ENCODE measurements at regions of chr22 and their contacts with region 1.

Region 1: DNA sequence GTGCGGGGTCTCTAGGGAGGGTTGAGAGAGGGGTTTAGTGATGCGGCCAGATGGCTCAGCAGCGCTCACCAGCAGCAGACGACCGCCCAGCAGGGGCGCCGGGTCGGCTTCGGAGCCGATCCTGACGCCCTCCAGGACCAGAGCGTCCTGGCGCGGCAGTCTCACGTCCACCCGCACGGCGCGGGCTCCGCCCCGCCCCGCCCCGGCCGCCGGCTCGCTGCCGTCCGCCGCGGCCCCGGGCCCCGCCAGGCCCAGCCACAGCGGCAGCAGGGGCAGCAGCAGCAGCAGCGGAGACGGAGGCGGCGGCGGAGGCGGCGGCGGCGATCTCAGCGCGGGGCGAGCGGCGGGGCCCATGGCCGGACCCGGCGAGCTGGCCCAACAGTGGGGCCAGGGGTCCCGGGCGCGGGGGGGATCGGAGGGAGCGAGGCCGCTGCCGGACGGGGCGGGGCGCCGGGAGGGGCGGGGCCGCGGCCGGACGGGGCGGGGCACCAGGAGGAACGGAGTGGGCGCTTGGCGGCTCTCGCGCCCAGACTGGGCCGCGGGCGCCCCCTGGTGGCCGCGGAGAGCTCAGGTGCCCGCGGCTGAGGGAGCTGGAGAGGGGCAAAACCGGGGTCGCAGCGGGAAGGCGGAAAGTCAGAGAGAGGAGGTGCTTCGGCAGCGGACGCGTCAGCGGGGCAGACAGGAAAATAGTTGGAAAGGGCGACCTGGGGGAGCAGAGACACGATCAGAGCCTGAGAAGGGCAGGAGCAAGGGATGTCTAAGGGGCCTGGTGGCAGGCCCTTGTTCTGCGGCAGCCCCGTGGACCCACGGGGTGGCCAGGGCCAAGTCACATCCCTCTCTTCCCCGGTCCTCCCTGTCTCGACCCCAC is at the start of gene RNF215:
- DNase-seq: peak; percentile 74 to 82 (median 79)
- H3K4me3 ChIP-seq: peak within 1 kb of the TSS; percentile 22
- H3K4me3 Mint-ChIP-seq: peak within 1 kb of the TSS; percentile 64 to 93 (median 78)
- H3K27ac ChIP-seq: no peak within 1 kb of the TSS
- H3K27ac Mint-ChIP-seq: peak within 1 kb of the TSS; percentile 13 to 96 (median 71)
- H3K4me1 ChIP-seq: peaks cover 4% of the 10 kb centered on the region
- H3K4me1 Mint-ChIP-seq: peaks cover 10 to 20% (median 12%) of the 10 kb centered on the region in 3 donors
- H3K27me3 ChIP-seq: no peaks in the 10 kb centered on the region
- H3K27me3 Mint-ChIP-seq: peaks cover 4 to 14% of the 10 kb centered on the region in 2 donors
- total RNA-seq, gene RNF215: 6.3 to 7.9 TPM

Region 2: GRCh38 chr22:29883045-29883774 is 504.0 kb before region 1 on chr22 and contains the start of gene MTMR3:
- CTCF ChIA-PET with region 1: no interaction called
- POLR2A ChIA-PET with region 1: no interaction called
- DNase-seq: peak; percentile 83 to 90 (median 88)
- H3K4me3 ChIP-seq: peak within 1 kb of the TSS; percentile 77
- H3K4me3 Mint-ChIP-seq: peak within 1 kb of the TSS in 6 of 7 donors; percentile 41 to 94 (median 92)
- H3K27ac ChIP-seq: peak within 1 kb of the TSS; percentile 74
- H3K27ac Mint-ChIP-seq: peak within 1 kb of the TSS; percentile 65 to 96 (median 89)
- H3K4me1 ChIP-seq: peaks cover 34% of the 10 kb centered on the region
- H3K4me1 Mint-ChIP-seq: peaks cover under 1 to 11% (median 2%) of the 10 kb centered on the region in 3 donors
- H3K27me3 ChIP-seq: no peaks in the 10 kb centered on the region
- H3K27me3 Mint-ChIP-seq: peaks cover 2 to 4% of the 10 kb centered on the region in 2 donors
- total RNA-seq, gene MTMR3: 20.6 to 22.5 TPM

Region 3: GRCh38 chr22:30104501-30105156 is 282.6 kb before region 1 on chr22:
- CTCF ChIA-PET with region 1: interaction called, 16 read pairs
- POLR2A ChIA-PET with region 1: no interaction called
- DNase-seq: peak in 1 of 5 donors; percentile 8
- H3K4me3 ChIP-seq: no peak overlapping the region
- H3K4me3 Mint-ChIP-seq: no peak overlapping the region
- H3K27ac ChIP-seq: no peak overlapping the region
- H3K27ac Mint-ChIP-seq: no peak overlapping the region
- H3K4me1 ChIP-seq: peaks cover 16% of the 10 kb centered on the region
- H3K4me1 Mint-ChIP-seq: peaks cover 8 to 25% (median 15%) of the 10 kb centered on the region in 3 donors
- H3K27me3 ChIP-seq: no peaks in the 10 kb centered on the region
- H3K27me3 Mint-ChIP-seq: peaks cover 0 to 6% of the 10 kb centered on the region in 2 donors

Region 4: GRCh38 chr22:30262917-30263741 is 124.1 kb before region 1 on chr22:
- CTCF ChIA-PET with region 1: interaction called, 43 read pairs
- POLR2A ChIA-PET with region 1: no interaction called
- DNase-seq: peak; percentile 64 to 84 (median 74)
- H3K4me3 ChIP-seq: peak overlapping the region; percentile 7
- H3K4me3 Mint-ChIP-seq: peak overlapping the region; percentile 37 to 81 (median 63)
- H3K27ac ChIP-seq: no peak overlapping the region
- H3K27ac Mint-ChIP-seq: peak overlapping the region in 7 of 8 donors; percentile 45 to 93 (median 82)
- H3K4me1 ChIP-seq: peaks cover 38% of the 10 kb centered on the region
- H3K4me1 Mint-ChIP-seq: peaks cover 36 to 46% (median 44%) of the 10 kb centered on the region in 3 donors
- H3K27me3 ChIP-seq: no peaks in the 10 kb centered on the region
- H3K27me3 Mint-ChIP-seq: peaks cover 0 to 1% of the 10 kb centered on the region in 2 donors

Region 5: GRCh38 chr22:30413745-30414524 is 26.7 kb after region 1 on chr22:
- CTCF ChIA-PET with region 1: interaction called, 12 read pairs
- POLR2A ChIA-PET with region 1: no interaction called
- DNase-seq: peak in 1 of 5 donors; percentile 33
- H3K4me3 ChIP-seq: no peak overlapping the region
- H3K4me3 Mint-ChIP-seq: no peak overlapping the region
- H3K27ac ChIP-seq: no peak overlapping the region
- H3K27ac Mint-ChIP-seq: peak overlapping the region in 3 of 8 donors; percentile 12 to 81 (median 70)
- H3K4me1 ChIP-seq: peaks cover 15% of the 10 kb centered on the region
- H3K4me1 Mint-ChIP-seq: no peaks in the 10 kb centered on the region
- H3K27me3 ChIP-seq: no peaks in the 10 kb centered on the region
- H3K27me3 Mint-ChIP-seq: no peaks in the 10 kb centered on the region

Region 6: GRCh38 chr22:30485362-30485988 is 98.3 kb after region 1 on chr22:
- CTCF ChIA-PET with region 1: interaction called, 68 read pairs
- POLR2A ChIA-PET with region 1: no interaction called
- DNase-seq: peak; percentile 65 to 79 (median 69)
- H3K4me3 ChIP-seq: no peak overlapping the region
- H3K4me3 Mint-ChIP-seq: no peak overlapping the region
- H3K27ac ChIP-seq: no peak overlapping the region
- H3K27ac Mint-ChIP-seq: peak overlapping the region in 1 of 8 donors; percentile 7
- H3K4me1 ChIP-seq: no peaks in the 10 kb centered on the region
- H3K4me1 Mint-ChIP-seq: peaks cover 0 to 3% (median 0%) of the 10 kb centered on the region in 3 donors
- H3K27me3 ChIP-seq: no peaks in the 10 kb centered on the region
- H3K27me3 Mint-ChIP-seq: peaks cover 5 to 12% of the 10 kb centered on the region in 2 donors

Region 7: DNA sequence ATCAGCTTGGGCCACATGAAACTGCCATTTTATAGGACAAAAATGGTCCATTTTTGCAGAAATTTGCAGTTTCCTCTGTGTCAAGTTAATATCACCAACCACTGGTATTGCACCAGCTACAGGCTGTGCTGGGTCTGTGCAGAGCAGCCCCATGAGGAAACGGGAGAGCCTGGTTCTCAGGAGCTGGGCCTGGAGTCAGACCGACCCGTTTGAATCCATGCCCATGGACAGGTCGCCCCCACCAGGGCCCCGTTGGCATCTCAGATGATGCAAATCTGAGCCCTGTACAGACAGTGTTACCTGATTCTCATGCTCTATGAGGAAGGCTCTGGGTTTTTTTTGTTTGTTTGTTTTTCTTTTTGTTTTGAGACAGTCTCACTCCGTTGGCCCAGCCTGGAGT is 169.2 kb after region 1 on chr22:
- CTCF ChIA-PET with region 1: no interaction called
- POLR2A ChIA-PET with region 1: no interaction called
- DNase-seq: no peak
- H3K4me3 ChIP-seq: no peak overlapping the region
- H3K4me3 Mint-ChIP-seq: no peak overlapping the region
- H3K27ac ChIP-seq: no peak overlapping the region
- H3K27ac Mint-ChIP-seq: no peak overlapping the region
- H3K4me1 ChIP-seq: no peaks in the 10 kb centered on the region
- H3K4me1 Mint-ChIP-seq: no peaks in the 10 kb centered on the region
- H3K27me3 ChIP-seq: no peaks in the 10 kb centered on the region
- H3K27me3 Mint-ChIP-seq: peaks cover 2% of the 10 kb centered on the region in 2 donors

Measured in CD8-positive, alpha-beta memory T cell (primary cell).